ENCODE measurements at regions of chr17 and their contacts with region 1.

Region 1: DNA sequence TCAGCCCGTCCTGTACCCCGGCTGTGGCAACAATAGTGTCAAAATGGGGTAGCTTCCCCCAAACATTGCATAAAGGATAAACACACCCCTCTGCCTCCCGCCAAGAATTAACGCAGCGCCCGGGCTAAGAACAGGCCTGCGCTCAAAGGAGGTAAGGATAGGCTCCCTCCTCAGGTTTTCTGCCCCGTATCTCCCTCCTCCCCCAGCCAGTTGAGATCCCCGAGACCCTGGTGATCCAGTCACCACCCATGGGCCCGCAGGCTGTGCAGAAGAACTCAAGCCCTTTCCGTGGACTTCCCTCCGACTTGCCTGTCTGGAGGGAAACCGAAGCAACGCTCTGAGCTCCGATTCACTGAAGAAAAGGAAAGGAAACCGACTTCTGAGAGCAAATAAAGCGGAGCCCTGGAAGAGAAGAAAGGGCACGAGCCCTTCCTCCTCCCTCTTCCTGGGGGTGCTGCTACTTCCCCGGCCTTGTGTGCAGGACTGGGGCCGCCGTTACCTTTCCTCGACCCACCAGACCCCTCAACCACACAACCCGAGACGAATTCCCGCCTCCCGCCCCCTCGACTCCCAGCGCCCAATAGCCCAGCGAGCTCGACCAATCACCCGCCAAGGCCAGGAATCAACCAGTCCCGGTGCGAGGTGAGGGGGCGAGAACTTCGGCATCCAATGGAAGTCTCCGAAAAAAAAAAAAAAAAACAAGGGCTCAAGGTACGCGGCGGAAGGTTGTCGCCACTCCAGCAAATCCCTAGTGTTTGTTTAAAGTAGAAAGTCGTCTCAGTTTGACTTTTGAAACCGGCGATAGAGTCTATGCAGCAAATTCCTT is at the start of gene BRIP1:
- DNase-seq: peak; percentile 95
- H3K4me3 ChIP-seq: peak within 1 kb of the TSS; percentile 68 to 81 (median 73)
- H3K27ac ChIP-seq: peak within 1 kb of the TSS; percentile 91
- H3K4me1 ChIP-seq: peaks cover 9% of the 10 kb centered on the region
- H3K27me3 ChIP-seq: no peaks in the 10 kb centered on the region
- CTCF ChIP-seq: no peak
- total RNA-seq, gene BRIP1: 10.2 to 13.2 TPM

Region 2: GRCh38 chr17:61927200-61928165 is 64.3 kb after region 1 on chr17 and contains the start of gene INTS2:
- CTCF ChIA-PET with region 1: no interaction called
- dilution Hi-C with region 1: no loop called
- in situ Hi-C with region 1: no loop called
- intact Hi-C with region 1: loop called (anchors 2 kb)
- DNase-seq: peak; percentile 92
- H3K4me3 ChIP-seq: peak within 1 kb of the TSS; percentile 65 to 79 (median 65)
- H3K27ac ChIP-seq: peak within 1 kb of the TSS; percentile 63
- H3K4me1 ChIP-seq: peaks cover 14% of the 10 kb centered on the region
- H3K27me3 ChIP-seq: no peaks in the 10 kb centered on the region
- CTCF ChIP-seq: no peak
- total RNA-seq, gene INTS2: 14.4 to 20.3 TPM

Region 3: DNA sequence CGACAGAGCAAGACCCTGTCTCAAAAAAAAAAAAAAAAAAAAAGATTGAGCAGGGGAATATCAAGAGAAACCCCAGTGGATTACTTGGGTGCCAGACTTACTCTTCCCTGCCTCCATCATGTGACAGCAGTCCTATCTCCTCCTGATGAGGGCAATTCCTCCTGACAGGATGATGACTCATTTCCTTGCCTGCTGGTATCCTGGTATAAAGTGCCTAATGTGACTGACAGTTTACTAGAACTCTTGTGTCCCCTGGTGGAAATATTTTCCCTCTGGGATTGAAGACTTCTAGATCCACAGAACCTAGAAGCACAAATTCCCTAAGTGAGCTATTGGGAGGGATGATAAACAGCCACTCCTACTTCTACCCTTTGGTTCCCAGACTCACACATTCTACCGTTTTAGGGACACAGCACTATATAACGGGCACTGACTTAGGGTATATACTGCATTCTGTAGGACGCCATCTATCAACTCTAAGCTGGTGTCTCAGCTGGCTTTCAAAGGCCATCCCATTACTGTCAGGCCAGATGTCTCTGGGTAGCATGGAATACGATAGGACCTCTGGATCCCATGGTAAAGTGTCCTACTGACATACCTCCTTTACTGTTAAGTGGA is 316.5 kb after region 1 on chr17:
- CTCF ChIA-PET with region 1: interaction called, 5 read pairs
- dilution Hi-C with region 1: no loop called
- in situ Hi-C with region 1: no loop called
- intact Hi-C with region 1: loop called (anchors 10 kb)
- DNase-seq: peak; percentile 92
- H3K4me3 ChIP-seq: no peak overlapping the region
- H3K27ac ChIP-seq: no peak overlapping the region
- H3K4me1 ChIP-seq: peaks cover 19% of the 10 kb centered on the region
- H3K27me3 ChIP-seq: no peaks in the 10 kb centered on the region
- CTCF ChIP-seq: peak; percentile 41 to 56